Caco-2 (cell line): ENCODE measurements at regions of chr2 and their contacts with region 1.

Region 1: DNA sequence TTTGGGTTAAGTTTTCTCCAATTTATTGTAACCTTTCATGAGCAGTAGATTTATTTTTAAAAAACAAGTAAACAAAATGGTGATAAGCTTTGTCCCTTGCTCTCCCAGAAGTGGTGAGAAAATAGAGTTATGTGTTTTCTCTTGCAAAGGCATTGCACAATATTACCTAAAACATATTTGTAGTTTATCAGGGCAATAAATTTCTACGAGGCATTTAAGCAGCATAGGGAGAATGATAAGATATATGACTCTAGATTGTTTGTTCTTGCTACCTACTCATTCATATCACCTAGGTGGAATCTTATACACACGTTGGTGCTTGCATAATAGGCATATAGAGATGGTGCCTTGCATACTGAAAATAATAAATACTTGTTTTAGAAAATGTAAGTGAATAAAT is 201.7 kb downstream of the MYO1B start:
- DNase-seq: peak in 1 of 2 experiments; percentile 26
- H3K4me3 ChIP-seq: no peak overlapping the region
- H3K4me3 Mint-ChIP-seq: no peak overlapping the region
- H3K27ac Mint-ChIP-seq: peak overlapping the region; percentile 20
- H3K4me1 ChIP-seq: peaks cover 20% of the 10 kb centered on the region
- H3K4me1 Mint-ChIP-seq: peaks cover 21% of the 10 kb centered on the region
- H3K27me3 ChIP-seq: no peaks in the 10 kb centered on the region
- H3K27me3 Mint-ChIP-seq: no peaks in the 10 kb centered on the region
- CTCF ChIP-seq: no peak

Region 2: DNA sequence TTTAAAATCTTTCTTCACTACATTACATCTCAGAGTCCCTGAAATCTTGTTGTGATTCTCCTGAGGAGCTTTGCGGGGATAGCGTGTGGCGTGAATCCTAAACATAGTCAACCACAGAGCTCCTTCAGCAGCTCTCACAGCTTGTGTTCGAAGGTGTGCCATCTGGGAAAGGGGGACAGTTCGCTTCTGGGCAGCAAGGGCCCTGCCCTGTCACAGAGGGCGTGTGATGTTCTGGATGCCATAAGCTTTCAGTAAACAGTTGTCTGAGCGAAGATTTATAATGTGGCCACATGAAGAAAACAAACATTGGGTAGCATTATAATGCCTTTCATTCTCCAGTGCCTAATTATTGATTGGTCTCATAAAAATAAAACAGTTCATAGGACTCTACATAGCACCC is 29.2 kb before region 1 on chr2:
- CTCF ChIA-PET with region 1: no interaction called
- POLR2A ChIA-PET with region 1: no interaction called
- intact Hi-C with region 1: loop called (anchors 1 kb)
- DNase-seq: no peak
- H3K4me3 ChIP-seq: no peak overlapping the region
- H3K4me3 Mint-ChIP-seq: no peak overlapping the region
- H3K27ac Mint-ChIP-seq: peak overlapping the region; percentile 23
- H3K4me1 ChIP-seq: peaks cover 20% of the 10 kb centered on the region
- H3K4me1 Mint-ChIP-seq: peaks cover 13% of the 10 kb centered on the region
- H3K27me3 ChIP-seq: no peaks in the 10 kb centered on the region
- H3K27me3 Mint-ChIP-seq: no peaks in the 10 kb centered on the region
- CTCF ChIP-seq: no peak